A549 (cell line): ENCODE measurements at regions of chrX and their contacts with region 1.

Region 1: DNA sequence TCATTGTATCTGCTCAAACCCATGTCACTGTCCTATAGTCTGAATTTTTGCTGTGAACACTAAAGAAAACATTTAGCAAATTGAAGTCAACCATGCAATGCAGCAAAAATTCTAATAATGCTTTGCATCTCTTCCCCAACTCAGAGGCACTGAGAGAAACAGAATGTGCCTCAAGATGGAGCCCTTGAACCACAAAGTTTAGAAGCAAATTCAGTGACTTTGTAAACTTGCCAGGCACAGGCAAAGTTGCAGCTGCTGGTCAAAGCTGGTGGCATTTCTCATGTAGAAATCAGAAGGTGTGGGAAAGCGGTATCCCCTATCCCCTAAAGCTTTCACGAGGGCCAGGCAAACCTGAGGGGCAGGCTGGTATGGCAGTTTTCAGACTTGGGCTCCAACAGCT is 121.7 kb upstream of the DIPK2B start:
- DNase-seq: peak; percentile 16 to 81
- ATAC-seq: peak; percentile 88 to 90
- H3K4me3 ChIP-seq: no peak overlapping the region
- H3K27ac ChIP-seq: peak overlapping the region; percentile 80 to 87
- H3K4me1 ChIP-seq: peaks cover 12% of the 10 kb centered on the region
- CTCF ChIP-seq: peak; percentile 67
- EP300 ChIP-seq: no peak
- POLR2A ChIP-seq: no peak
- RAD21 ChIP-seq: peak; percentile 88 to 91

Region 2: GRCh38 chrX:44785652-44786051 is 536.7 kb before region 1 on chrX:
- CTCF ChIA-PET with region 1: no interaction called
- POLR2A ChIA-PET with region 1: no interaction called
- DNase-seq: peak in 1 of 2 experiments; percentile 26
- ATAC-seq: peak; percentile 44 to 56; a peak in 5 of 6 replicates
- H3K4me3 ChIP-seq: no peak overlapping the region
- H3K27ac ChIP-seq: no peak overlapping the region
- H3K4me1 ChIP-seq: no peaks in the 10 kb centered on the region
- CTCF ChIP-seq: no peak
- EP300 ChIP-seq: no peak
- POLR2A ChIP-seq: no peak
- RAD21 ChIP-seq: no peak

Region 3: DNA sequence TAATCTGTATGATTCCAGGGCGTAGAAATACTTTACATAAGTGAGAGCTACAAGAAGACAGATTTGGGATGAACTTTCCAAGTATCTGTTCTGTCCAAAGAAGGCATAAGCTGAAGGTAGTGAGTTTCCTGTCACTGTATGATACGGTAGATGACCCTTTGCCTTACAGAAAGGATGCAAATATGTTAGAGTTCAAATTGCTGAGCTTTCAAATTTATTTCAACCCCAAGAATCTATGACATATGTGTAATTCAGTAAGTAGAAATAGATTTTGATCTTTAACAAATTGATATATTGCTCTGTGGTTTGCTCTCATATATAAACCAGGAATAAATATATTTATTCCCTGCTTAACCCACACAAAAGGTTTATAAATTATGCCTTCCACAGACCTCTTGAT is 138.2 kb before region 1 on chrX:
- CTCF ChIA-PET with region 1: no interaction called
- POLR2A ChIA-PET with region 1: no interaction called
- DNase-seq: no peak
- ATAC-seq: no peak
- H3K4me3 ChIP-seq: no peak overlapping the region
- H3K27ac ChIP-seq: no peak overlapping the region
- H3K4me1 ChIP-seq: no peaks in the 10 kb centered on the region
- CTCF ChIP-seq: no peak
- EP300 ChIP-seq: no peak
- POLR2A ChIP-seq: no peak
- RAD21 ChIP-seq: no peak

Region 4: DNA sequence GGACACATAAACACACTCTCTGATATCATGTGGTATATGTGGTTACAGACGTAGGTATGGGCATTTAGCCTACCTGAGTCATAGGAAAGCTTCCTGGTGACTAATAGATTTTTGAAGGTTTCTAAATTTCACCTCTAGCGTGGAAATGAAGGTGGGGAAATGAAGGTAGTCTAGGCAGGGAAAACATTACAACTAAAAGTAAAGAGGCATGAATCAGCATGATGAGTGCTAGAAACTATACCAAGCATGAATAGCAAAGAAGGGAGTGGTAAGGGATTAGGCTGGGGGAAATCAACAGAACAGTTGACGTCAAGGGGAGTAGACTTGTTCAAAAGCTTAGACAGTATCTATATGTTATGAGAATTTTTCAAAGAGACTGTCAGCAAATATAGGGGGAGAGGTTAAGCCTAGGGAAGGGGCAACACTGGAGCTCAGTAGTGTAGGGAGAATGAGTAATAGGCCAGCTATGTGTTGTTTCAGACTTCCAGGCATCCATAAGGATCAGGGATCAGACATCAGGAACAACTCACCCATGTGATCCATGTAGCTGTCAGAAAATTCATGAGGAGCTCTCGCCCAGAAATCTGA is 157.5 kb after region 1 on chrX:
- CTCF ChIA-PET with region 1: interaction called, 20 read pairs
- POLR2A ChIA-PET with region 1: interaction called, 5 read pairs
- DNase-seq: peak; percentile 55 to 96
- ATAC-seq: peak; percentile 95 to 96
- H3K4me3 ChIP-seq: no peak overlapping the region
- H3K27ac ChIP-seq: peak overlapping the region; percentile 74 to 93
- H3K4me1 ChIP-seq: peaks cover 19% of the 10 kb centered on the region
- CTCF ChIP-seq: no peak
- EP300 ChIP-seq: peak; percentile 92 to 97
- POLR2A ChIP-seq: no peak
- RAD21 ChIP-seq: peak; percentile 17 to 52; a peak in 4 of 5 replicates

Region 5: GRCh38 chrX:45505214-45505613 is 182.8 kb after region 1 on chrX:
- CTCF ChIA-PET with region 1: interaction called, 12 read pairs
- POLR2A ChIA-PET with region 1: no interaction called
- DNase-seq: peak in 1 of 2 experiments; percentile 31
- ATAC-seq: no peak
- H3K4me3 ChIP-seq: no peak overlapping the region
- H3K27ac ChIP-seq: peak overlapping the region; percentile 74 to 88; a peak in 5 of 6 replicates
- H3K4me1 ChIP-seq: peaks cover 33% of the 10 kb centered on the region
- CTCF ChIP-seq: no peak
- EP300 ChIP-seq: no peak
- POLR2A ChIP-seq: no peak
- RAD21 ChIP-seq: no peak

Region 6: DNA sequence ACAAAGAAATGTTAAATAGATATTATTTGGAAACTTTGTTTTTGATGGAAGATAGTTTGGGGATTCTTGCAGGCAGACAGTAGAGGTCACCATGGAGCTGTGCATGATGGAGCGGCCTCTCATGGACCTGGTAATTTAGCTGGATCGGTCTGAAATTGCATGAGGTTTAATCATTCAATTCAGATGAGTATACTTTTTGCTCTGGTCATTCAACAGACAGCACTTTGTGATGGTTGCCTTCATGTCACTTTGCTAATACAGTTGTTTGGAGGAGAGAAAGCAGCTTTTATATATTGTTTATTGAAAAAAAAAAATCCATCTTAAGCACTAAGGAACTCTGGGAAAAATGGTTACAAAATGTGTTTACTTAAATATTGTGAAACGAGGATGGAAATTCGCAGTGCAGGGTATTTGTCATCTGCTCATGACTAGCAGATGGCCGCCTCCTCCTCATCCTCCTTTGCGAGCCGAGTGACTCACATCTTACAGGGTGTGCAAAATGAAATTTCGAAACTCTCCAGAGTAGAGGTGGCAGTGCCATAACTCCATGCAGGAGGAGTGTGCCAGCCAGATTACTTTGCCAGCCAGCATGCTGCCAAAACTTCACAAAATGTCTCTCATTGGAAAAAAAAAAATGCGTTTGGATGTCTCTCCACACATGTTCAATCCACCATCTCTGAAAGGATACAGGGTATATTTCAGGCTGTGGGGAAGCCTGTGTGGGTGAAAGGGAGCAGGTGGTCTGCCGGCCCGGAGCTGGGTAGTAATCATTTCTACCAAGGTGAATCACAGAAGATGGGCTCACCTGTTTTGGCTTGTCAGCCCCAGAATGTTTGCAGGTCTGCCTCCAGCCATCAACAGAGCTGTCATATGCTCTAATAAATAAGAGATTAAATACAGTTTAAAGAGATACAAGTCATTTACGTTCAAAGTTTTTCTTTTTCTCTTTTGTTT is 193.2 kb after region 1 on chrX:
- CTCF ChIA-PET with region 1: interaction called, 16 read pairs
- POLR2A ChIA-PET with region 1: no interaction called
- DNase-seq: peak; percentile 56 to 95
- ATAC-seq: peak; percentile 95 to 99
- H3K4me3 ChIP-seq: peak overlapping the region; percentile 18; the same call in 1 of the 3 replicates
- H3K27ac ChIP-seq: peak overlapping the region; percentile 79 to 96
- H3K4me1 ChIP-seq: peaks cover 40% of the 10 kb centered on the region
- CTCF ChIP-seq: peak; percentile 79
- EP300 ChIP-seq: peak; percentile 91; a peak in 3 of 5 replicates
- POLR2A ChIP-seq: no peak
- RAD21 ChIP-seq: peak; percentile 90 to 91

Region 7: GRCh38 chrX:45710081-45710801 is 387.9 kb after region 1 on chrX:
- CTCF ChIA-PET with region 1: interaction called, 10 read pairs
- POLR2A ChIA-PET with region 1: no interaction called
- DNase-seq: peak; percentile 5 to 25
- ATAC-seq: peak; percentile 88 to 91
- H3K4me3 ChIP-seq: no peak overlapping the region
- H3K27ac ChIP-seq: peak overlapping the region; percentile 51 to 66; a peak in 3 of 6 replicates
- H3K4me1 ChIP-seq: peaks cover 25% of the 10 kb centered on the region
- CTCF ChIP-seq: no peak
- EP300 ChIP-seq: no peak
- POLR2A ChIP-seq: no peak
- RAD21 ChIP-seq: no peak

Region 8: DNA sequence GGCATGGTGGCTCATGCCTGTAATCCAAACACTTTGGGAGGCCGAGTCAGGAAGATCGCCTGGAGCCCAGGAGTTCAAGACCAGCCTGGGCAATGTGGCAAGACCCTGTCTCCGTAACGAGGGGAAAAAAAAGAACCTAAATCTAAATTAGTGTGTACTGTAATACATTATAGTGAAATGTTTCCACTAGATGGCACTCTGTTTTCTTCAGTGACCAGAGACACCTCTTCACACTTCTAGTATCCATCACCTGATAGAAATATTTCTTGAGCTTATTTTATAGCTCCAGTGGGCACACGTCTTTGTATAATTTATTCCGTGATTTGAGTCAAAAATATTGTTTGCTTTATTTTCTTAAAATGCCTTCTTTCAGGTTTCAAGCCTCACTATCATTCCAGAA is 479.2 kb after region 1 on chrX:
- CTCF ChIA-PET with region 1: interaction called, 12 read pairs
- POLR2A ChIA-PET with region 1: no interaction called
- DNase-seq: peak in 1 of 2 experiments; percentile 62
- ATAC-seq: peak; percentile 69 to 81; a peak in 5 of 6 replicates
- H3K4me3 ChIP-seq: peak overlapping the region; percentile 33
- H3K27ac ChIP-seq: peak overlapping the region; percentile 84 to 91
- H3K4me1 ChIP-seq: peaks cover 90% of the 10 kb centered on the region
- CTCF ChIP-seq: peak; percentile 48
- EP300 ChIP-seq: no peak
- POLR2A ChIP-seq: no peak
- RAD21 ChIP-seq: peak; percentile 29 to 53; a peak in 4 of 5 replicates

Region 9: GRCh38 chrX:46408553-46409407 is 1086.4 kb after region 1 on chrX:
- CTCF ChIA-PET with region 1: interaction called, 17 read pairs
- POLR2A ChIA-PET with region 1: interaction called, 3 read pairs
- DNase-seq: peak; percentile 35 to 76
- ATAC-seq: peak; percentile 64 to 72
- H3K4me3 ChIP-seq: no peak overlapping the region
- H3K27ac ChIP-seq: peak overlapping the region; percentile 28 to 58; a peak in 5 of 6 replicates
- H3K4me1 ChIP-seq: peaks cover 7% of the 10 kb centered on the region; the same call in 1 of the 3 replicates
- CTCF ChIP-seq: peak; percentile 89
- EP300 ChIP-seq: no peak
- POLR2A ChIP-seq: no peak
- RAD21 ChIP-seq: peak; percentile 94 to 96